Caco-2 (cell line): ENCODE measurements at regions of chr2 and their contacts with region 1.

Region 1: DNA sequence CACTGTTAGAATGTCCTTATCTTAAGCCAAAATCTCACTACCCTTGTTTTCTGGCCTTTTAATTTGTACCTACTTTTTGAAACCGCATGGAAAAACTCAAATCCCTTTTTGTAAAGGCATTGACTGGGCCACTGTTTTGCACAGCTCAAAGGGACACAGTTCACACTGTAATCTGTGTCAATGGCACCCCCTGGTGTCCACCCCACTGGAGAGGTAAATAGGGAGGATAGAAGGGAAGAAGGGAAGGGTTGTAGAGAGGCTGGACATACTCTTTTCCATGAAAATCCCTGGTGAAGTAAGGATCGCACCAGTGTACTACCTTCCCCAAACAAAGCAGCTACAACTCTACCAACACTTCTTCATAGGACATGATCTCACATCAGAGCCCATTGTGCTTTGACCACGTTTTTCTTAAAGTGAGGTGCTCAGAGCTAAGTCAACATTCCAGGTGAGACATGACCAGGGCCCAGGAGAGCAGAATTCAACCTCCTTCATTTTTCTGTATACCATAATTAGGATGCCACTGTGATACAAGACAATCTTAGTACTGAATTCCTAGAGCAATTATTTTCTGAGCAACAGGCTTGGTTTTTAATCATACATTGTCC is 92.4 kb upstream of the RMDN2 start:
- DNase-seq: peak; percentile 91 to 93
- H3K4me3 ChIP-seq: no peak overlapping the region
- H3K4me3 Mint-ChIP-seq: no peak overlapping the region
- H3K27ac Mint-ChIP-seq: peak overlapping the region; percentile 13
- H3K4me1 ChIP-seq: peaks cover 32% of the 10 kb centered on the region
- H3K4me1 Mint-ChIP-seq: peaks cover 19% of the 10 kb centered on the region
- H3K27me3 ChIP-seq: no peaks in the 10 kb centered on the region
- H3K27me3 Mint-ChIP-seq: no peaks in the 10 kb centered on the region
- CTCF ChIP-seq: peak; percentile 86 to 89

Region 2: GRCh38 chr2:37389989-37390765 is 442.5 kb before region 1 on chr2:
- CTCF ChIA-PET with region 1: interaction called, 33 read pairs
- POLR2A ChIA-PET with region 1: no interaction called
- intact Hi-C with region 1: no loop called
- DNase-seq: peak; percentile 40 to 46
- H3K4me3 ChIP-seq: no peak overlapping the region
- H3K4me3 Mint-ChIP-seq: no peak overlapping the region
- H3K27ac Mint-ChIP-seq: no peak overlapping the region
- H3K4me1 ChIP-seq: peaks cover 12% of the 10 kb centered on the region
- H3K4me1 Mint-ChIP-seq: peaks cover 26% of the 10 kb centered on the region
- H3K27me3 ChIP-seq: no peaks in the 10 kb centered on the region
- H3K27me3 Mint-ChIP-seq: no peaks in the 10 kb centered on the region
- CTCF ChIP-seq: no peak

Region 3: DNA sequence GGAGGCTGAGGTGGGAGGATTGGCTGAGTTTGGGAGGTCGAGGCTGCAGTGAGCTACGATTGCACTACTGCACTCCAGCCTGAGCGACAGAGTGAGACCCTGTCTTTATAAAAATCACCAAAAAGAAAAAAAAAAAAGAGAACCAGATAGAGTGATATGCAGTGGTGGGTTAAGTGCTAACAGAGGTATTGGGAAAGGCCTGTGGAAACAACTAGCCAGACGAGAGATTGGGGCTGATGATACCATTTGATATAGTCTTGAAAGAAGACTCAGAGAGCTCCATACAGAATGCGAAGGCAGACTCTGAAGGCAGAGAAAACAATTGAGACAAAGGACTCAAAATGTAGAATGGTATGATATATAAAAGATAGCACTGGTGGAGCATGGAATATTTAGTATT is 295.4 kb before region 1 on chr2:
- CTCF ChIA-PET with region 1: interaction called, 3 read pairs
- POLR2A ChIA-PET with region 1: no interaction called
- intact Hi-C with region 1: loop called (anchors 1 kb)
- DNase-seq: no peak
- H3K4me3 ChIP-seq: no peak overlapping the region
- H3K4me3 Mint-ChIP-seq: no peak overlapping the region
- H3K27ac Mint-ChIP-seq: no peak overlapping the region
- H3K4me1 ChIP-seq: no peaks in the 10 kb centered on the region
- H3K4me1 Mint-ChIP-seq: peaks cover 10% of the 10 kb centered on the region
- H3K27me3 ChIP-seq: no peaks in the 10 kb centered on the region
- H3K27me3 Mint-ChIP-seq: no peaks in the 10 kb centered on the region
- CTCF ChIP-seq: no peak

Region 4: GRCh38 chr2:37653805-37654378 is 178.8 kb before region 1 on chr2:
- CTCF ChIA-PET with region 1: interaction called, 12 read pairs
- POLR2A ChIA-PET with region 1: no interaction called
- intact Hi-C with region 1: loop called (anchors 5 kb)
- DNase-seq: no peak
- H3K4me3 ChIP-seq: no peak overlapping the region
- H3K4me3 Mint-ChIP-seq: no peak overlapping the region
- H3K27ac Mint-ChIP-seq: peak overlapping the region; percentile 68
- H3K4me1 ChIP-seq: peaks cover 67% of the 10 kb centered on the region
- H3K4me1 Mint-ChIP-seq: peaks cover 73% of the 10 kb centered on the region
- H3K27me3 ChIP-seq: no peaks in the 10 kb centered on the region
- H3K27me3 Mint-ChIP-seq: no peaks in the 10 kb centered on the region
- CTCF ChIP-seq: no peak

Region 5: DNA sequence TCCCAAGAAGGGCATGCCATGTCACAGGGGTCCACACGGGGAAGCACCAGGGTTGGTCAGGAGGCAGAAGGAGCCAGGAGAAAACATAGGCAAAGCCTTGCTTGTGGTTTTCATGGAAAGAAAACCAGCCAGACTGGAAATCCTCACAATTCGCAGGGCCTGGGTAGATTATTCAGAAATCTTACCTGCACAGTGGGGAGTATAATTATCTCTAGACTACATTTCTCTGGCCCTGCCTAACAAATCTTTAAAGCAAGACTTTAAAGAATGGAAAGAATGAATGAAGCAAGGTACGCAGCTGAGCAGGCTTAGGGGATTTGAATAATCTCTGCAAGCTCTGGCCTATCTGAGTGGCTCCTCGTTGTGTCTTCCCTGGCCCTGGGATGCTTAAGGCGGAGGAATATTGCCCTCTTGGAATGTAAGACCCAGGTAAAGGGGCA is 94.3 kb before region 1 on chr2:
- CTCF ChIA-PET with region 1: interaction called, 4 read pairs
- POLR2A ChIA-PET with region 1: no interaction called
- intact Hi-C with region 1: loop called (anchors 1 kb)
- DNase-seq: peak; percentile 84 to 90
- H3K4me3 ChIP-seq: no peak overlapping the region
- H3K4me3 Mint-ChIP-seq: peak overlapping the region; percentile 52
- H3K27ac Mint-ChIP-seq: peak overlapping the region; percentile 95
- H3K4me1 ChIP-seq: peaks cover 25% of the 10 kb centered on the region
- H3K4me1 Mint-ChIP-seq: peaks cover 50% of the 10 kb centered on the region
- H3K27me3 ChIP-seq: no peaks in the 10 kb centered on the region
- H3K27me3 Mint-ChIP-seq: no peaks in the 10 kb centered on the region
- CTCF ChIP-seq: no peak

Region 6: DNA sequence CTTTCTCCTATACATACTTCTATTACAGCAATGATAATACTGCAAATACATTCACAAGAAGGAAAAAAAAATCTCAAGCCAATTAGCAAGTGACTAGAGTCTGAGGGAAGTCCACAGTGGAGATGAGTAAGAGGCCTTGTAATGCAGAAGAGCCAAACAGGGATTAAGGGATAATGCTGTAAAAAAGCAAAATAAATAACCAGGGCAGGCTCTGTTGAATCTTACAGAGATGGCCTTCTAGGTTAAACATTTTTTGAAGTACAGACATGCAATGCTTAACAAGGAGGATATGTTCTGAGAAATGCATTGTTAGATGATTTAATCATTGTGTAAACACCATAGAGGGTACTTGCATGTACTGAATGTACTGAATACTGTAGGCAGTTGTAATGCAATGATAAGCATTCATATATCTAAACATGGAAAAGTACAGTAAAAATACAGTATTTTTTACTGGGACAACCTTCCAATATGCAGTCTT is 29.8 kb before region 1 on chr2:
- CTCF ChIA-PET with region 1: interaction called, 5 read pairs
- POLR2A ChIA-PET with region 1: no interaction called
- intact Hi-C with region 1: loop called (anchors 1 kb)
- DNase-seq: peak in 1 of 2 experiments; percentile 70
- H3K4me3 ChIP-seq: no peak overlapping the region
- H3K4me3 Mint-ChIP-seq: peak overlapping the region; percentile 19
- H3K27ac Mint-ChIP-seq: peak overlapping the region; percentile 77
- H3K4me1 ChIP-seq: peaks cover 47% of the 10 kb centered on the region
- H3K4me1 Mint-ChIP-seq: peaks cover 38% of the 10 kb centered on the region
- H3K27me3 ChIP-seq: no peaks in the 10 kb centered on the region
- H3K27me3 Mint-ChIP-seq: no peaks in the 10 kb centered on the region
- CTCF ChIP-seq: no peak

Region 7: DNA sequence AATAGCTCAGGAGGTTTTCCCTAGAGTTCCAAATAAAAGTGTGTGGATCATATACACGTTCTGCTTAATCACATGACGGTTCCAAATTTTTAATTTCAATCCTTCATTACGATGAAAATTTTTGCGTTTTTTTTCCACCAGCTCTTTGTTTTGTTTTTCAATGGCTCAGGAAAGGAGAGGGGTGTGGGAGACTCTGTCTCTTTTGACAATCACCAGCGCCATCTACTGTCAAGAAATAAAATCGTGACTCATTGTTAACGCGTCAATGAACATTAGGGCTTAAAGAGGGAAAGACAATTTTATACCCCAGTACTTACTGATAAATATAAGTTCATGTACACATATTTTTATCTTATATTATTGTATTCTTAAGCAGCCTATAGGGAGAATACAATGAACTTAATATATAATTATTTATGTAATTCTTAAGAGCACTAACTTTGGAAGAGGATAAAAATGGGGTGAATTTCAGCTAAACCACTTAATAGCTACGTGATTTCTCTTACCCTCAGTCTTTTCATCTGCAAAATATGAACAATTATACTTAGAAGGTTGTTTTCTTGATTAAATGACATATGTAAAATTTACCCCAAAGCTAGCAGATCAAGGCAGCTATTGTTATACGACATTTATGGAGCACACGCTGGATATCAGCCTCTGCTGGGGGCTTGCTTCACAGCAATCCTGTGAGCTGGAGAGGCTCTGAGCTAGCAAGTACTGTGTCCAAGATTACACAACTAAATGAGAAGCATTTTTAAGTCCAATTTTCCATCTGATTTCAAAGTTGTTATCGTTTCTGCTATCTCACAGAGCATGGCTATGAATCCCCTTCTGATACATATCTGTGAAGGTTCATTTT is 45.0 kb after region 1 on chr2:
- CTCF ChIA-PET with region 1: interaction called, 41 read pairs
- POLR2A ChIA-PET with region 1: no interaction called
- intact Hi-C with region 1: loop called (anchors 1 kb)
- DNase-seq: peak in 1 of 2 experiments; percentile 74
- H3K4me3 ChIP-seq: no peak overlapping the region
- H3K4me3 Mint-ChIP-seq: no peak overlapping the region
- H3K27ac Mint-ChIP-seq: no peak overlapping the region
- H3K4me1 ChIP-seq: no peaks in the 10 kb centered on the region; the same call in 1 of the 2 replicates
- H3K4me1 Mint-ChIP-seq: peaks cover 9% of the 10 kb centered on the region
- H3K27me3 ChIP-seq: no peaks in the 10 kb centered on the region
- H3K27me3 Mint-ChIP-seq: no peaks in the 10 kb centered on the region
- CTCF ChIP-seq: peak; percentile 68 to 80

Region 8: GRCh38 chr2:37902991-37903390 is 70.3 kb after region 1 on chr2:
- CTCF ChIA-PET with region 1: no interaction called
- POLR2A ChIA-PET with region 1: no interaction called
- intact Hi-C with region 1: no loop called
- DNase-seq: no peak
- H3K4me3 ChIP-seq: no peak overlapping the region
- H3K4me3 Mint-ChIP-seq: no peak overlapping the region
- H3K27ac Mint-ChIP-seq: no peak overlapping the region
- H3K4me1 ChIP-seq: peaks cover 9% of the 10 kb centered on the region
- H3K4me1 Mint-ChIP-seq: peaks cover 8% of the 10 kb centered on the region
- H3K27me3 ChIP-seq: no peaks in the 10 kb centered on the region
- H3K27me3 Mint-ChIP-seq: no peaks in the 10 kb centered on the region
- CTCF ChIP-seq: no peak

Region 9: GRCh38 chr2:37966326-37966725 is 133.6 kb after region 1 on chr2:
- CTCF ChIA-PET with region 1: no interaction called
- POLR2A ChIA-PET with region 1: no interaction called
- intact Hi-C with region 1: no loop called
- DNase-seq: no peak
- H3K4me3 ChIP-seq: no peak overlapping the region
- H3K4me3 Mint-ChIP-seq: no peak overlapping the region
- H3K27ac Mint-ChIP-seq: no peak overlapping the region
- H3K4me1 ChIP-seq: peaks cover 13% of the 10 kb centered on the region; the same call in 1 of the 2 replicates
- H3K4me1 Mint-ChIP-seq: no peaks in the 10 kb centered on the region
- H3K27me3 ChIP-seq: no peaks in the 10 kb centered on the region
- H3K27me3 Mint-ChIP-seq: peaks cover 3% of the 10 kb centered on the region
- CTCF ChIP-seq: no peak